ENCODE measurements at regions of chr19 and their contacts with region 1.

Region 1: GRCh38 chr19:45643024-45643926 is 4.1 kb upstream of the EML2 start:
- DNase-seq: peak; percentile 97
- H3K4me3 Mint-ChIP-seq: peak overlapping the region; percentile 71
- H3K27ac Mint-ChIP-seq: peak overlapping the region; percentile 97
- H3K4me1 Mint-ChIP-seq: peaks cover 52% of the 10 kb centered on the region
- H3K27me3 Mint-ChIP-seq: no peaks in the 10 kb centered on the region

Region 2: DNA sequence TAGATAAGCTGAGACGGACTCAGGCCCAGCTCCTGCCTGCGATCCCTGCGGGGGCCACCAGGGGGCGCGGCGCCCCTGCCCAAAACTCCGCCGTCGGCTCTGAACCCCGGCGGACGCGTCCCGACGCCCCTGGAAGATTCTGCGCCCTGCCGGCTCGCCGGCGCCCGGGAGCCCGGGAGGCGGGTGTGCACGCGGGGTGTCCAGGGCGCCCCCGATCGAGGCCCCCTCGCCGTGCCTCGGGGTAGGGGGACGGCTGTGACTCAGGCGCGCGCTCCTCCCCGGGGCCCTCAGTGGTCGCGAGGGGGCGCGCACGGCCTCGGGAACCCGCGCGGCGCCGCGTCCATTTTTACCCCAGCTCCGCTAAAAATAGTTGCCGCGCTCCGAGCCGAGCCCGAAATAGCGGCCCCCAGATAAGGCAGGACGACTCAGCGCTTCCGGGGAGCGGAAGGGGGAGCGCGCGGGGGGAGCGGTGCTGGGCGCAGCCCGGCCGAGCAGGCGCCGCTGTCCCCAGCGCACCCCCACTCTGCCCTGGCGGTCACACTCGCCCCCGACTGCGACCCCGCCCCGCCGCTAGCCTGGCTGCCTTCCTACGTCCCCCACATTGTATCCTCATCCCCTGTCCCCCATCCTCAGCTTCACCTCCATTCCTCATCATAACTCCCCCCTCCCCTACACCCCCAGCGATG is 203.6 kb before region 1 on chr19:
- CTCF ChIA-PET with region 1: interaction called, 11 read pairs
- POLR2A ChIA-PET with region 1: interaction called, 4 read pairs
- intact Hi-C with region 1: no loop called
- DNase-seq: peak; percentile 87
- H3K4me3 Mint-ChIP-seq: peak overlapping the region; percentile 51
- H3K27ac Mint-ChIP-seq: peak overlapping the region; percentile 55
- H3K4me1 Mint-ChIP-seq: peaks cover 25% of the 10 kb centered on the region
- H3K27me3 Mint-ChIP-seq: no peaks in the 10 kb centered on the region

Region 3: DNA sequence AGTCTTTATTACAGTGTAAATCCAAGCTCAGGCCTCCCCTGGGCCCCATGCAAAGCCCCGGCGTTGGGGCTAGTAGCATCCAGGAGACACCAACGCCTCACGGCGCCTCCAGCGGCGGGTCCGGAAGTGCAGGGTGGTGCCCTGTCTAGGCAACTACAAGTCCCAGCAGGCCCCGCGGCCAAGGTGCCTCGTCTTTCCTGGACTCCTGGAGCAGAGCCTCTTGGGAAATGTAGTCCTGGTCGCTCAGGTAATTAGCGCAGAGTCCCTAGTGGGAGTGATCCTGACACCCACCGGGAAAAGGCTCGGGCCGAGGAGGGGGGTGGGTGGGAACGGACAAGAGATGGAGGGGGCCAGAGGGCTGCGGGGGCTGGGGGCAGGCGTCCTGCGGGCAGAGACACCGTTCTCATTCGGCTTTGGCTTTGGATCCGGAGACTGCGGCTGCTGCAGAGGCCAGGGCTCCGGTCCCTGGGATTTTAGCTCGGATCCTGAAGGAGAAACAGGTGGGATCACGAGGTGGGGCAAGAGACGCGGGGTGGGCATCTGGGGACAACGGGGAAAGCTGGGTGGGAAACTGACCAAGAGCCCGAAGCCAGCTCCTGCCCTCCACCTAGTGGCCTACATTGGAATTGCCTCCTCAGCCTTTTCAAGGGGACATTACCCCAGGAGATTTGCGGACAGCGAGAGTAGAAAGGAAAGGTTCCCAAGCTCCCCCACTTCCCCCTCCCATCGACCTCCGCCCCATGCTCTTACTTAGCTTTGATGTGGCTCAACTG is 157.8 kb before region 1 on chr19:
- CTCF ChIA-PET with region 1: interaction called, 27 read pairs
- POLR2A ChIA-PET with region 1: no interaction called
- intact Hi-C with region 1: no loop called
- DNase-seq: peak; percentile 99
- H3K4me3 Mint-ChIP-seq: peak overlapping the region; percentile 86
- H3K27ac Mint-ChIP-seq: peak overlapping the region; percentile 60
- H3K4me1 Mint-ChIP-seq: peaks cover 9% of the 10 kb centered on the region
- H3K27me3 Mint-ChIP-seq: no peaks in the 10 kb centered on the region

Region 4: GRCh38 chr19:45523642-45524256 is 119.5 kb before region 1 on chr19:
- CTCF ChIA-PET with region 1: interaction called, 5 read pairs
- POLR2A ChIA-PET with region 1: interaction called, 3 read pairs
- intact Hi-C with region 1: loop called (anchors 1 kb)
- DNase-seq: peak; percentile 84
- H3K4me3 Mint-ChIP-seq: no peak overlapping the region
- H3K27ac Mint-ChIP-seq: peak overlapping the region; percentile 70
- H3K4me1 Mint-ChIP-seq: peaks cover 18% of the 10 kb centered on the region
- H3K27me3 Mint-ChIP-seq: peaks cover under 1% of the 10 kb centered on the region

Region 5: DNA sequence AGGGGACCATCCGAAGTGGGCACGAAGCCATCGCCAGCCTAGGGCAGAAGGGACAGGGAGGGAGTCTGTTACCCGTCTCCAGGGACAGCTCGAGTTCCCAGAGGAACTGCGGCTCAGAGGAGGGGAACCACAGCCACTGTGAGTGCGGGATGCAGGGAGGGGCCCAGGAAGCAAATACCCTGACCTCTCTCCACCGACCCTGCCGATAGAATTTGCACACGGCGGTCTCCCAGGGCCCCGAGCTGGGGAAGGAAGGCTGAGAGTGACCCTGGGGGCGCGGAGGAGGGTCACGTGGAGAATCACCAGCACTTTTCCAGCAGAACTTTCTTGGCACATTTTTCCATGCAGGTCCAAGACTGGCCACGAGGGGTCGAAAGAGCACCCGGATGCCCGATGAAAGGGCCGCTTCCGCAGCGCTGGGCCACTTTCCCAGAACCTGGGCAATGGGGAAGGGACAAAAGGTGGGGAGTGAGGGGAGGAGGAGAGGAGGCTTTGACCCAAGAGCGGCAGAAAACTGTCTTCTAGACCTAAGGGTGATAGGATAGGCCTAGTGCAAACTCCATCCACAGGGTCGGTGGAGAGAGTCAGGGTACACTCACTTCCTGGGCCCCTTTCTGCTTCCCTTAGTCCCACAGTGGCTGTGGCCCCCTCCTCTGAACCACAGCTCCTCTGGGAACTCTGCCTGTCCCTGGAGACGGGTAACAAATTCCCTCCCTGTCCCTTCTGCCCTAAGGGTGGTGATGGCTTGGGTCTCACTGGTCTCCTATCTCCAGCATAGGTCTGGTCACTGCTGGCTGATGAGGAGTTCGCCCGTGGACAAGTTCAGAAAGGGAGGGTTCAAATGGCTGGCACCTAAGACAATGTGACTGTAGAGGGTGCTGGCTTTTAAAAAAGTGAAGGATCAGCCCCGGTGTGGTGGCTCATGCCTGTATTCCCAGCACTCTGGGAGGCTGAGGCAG is 35.9 kb before region 1 on chr19:
- CTCF ChIA-PET with region 1: interaction called, 25 read pairs
- POLR2A ChIA-PET with region 1: interaction called, 4 read pairs
- intact Hi-C with region 1: loop called (anchors 1 kb)
- DNase-seq: peak; percentile 65
- H3K4me3 Mint-ChIP-seq: peak overlapping the region; percentile 25
- H3K27ac Mint-ChIP-seq: peak overlapping the region; percentile 80
- H3K4me1 Mint-ChIP-seq: peaks cover 13% of the 10 kb centered on the region
- H3K27me3 Mint-ChIP-seq: peaks cover 10% of the 10 kb centered on the region

Region 6: GRCh38 chr19:45670670-45671453 is 27.6 kb after region 1 on chr19:
- CTCF ChIA-PET with region 1: interaction called, 7 read pairs
- POLR2A ChIA-PET with region 1: interaction called, 19 read pairs
- intact Hi-C with region 1: loop called (anchors 1 kb)
- DNase-seq: peak; percentile 83
- H3K4me3 Mint-ChIP-seq: peak overlapping the region; percentile 57
- H3K27ac Mint-ChIP-seq: no peak overlapping the region
- H3K4me1 Mint-ChIP-seq: peaks cover 33% of the 10 kb centered on the region
- H3K27me3 Mint-ChIP-seq: peaks cover 17% of the 10 kb centered on the region

Region 7: GRCh38 chr19:45717166-45717982 is 74.1 kb after region 1 on chr19:
- CTCF ChIA-PET with region 1: no interaction called
- POLR2A ChIA-PET with region 1: interaction called, 5 read pairs
- intact Hi-C with region 1: loop called (anchors 1 kb)
- DNase-seq: peak; percentile 99
- H3K4me3 Mint-ChIP-seq: peak overlapping the region; percentile 96
- H3K27ac Mint-ChIP-seq: peak overlapping the region; percentile 93
- H3K4me1 Mint-ChIP-seq: peaks cover 39% of the 10 kb centered on the region
- H3K27me3 Mint-ChIP-seq: no peaks in the 10 kb centered on the region

Measured in activated CD4-positive, alpha-beta memory T cell treated with anti-CD3 and anti-CD28 coated beads for 36 hours (primary cell).